H1 (cell line): ENCODE measurements at regions of chr11 and their contacts with region 1.

Region 1: DNA sequence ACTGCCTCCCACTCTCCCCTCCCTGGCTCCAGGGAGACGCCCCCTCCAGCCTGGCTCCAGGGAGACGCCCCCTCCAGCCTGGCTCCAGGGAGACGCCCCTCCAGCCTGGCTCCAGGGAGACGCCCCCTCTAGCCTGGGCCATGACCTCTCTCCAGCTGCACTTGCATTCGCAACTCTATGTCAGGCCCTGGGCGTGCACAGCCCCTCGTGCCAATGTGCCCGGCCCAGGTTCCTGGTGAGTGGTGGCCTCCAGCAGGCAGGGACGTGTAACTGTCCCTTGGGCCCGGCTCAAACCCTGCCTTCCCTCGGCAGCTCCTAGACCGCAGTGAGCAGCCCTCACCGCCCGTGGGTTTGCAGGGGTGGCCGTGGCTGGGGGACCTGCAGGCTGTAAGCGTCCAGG is 6.9 kb downstream of the MUC6 start:
- DNase-seq: no peak
- H3K4me3 ChIP-seq: no peak overlapping the region
- H3K27ac ChIP-seq: no peak overlapping the region
- H3K4me1 ChIP-seq: 0 out of 7 replicates have a peak, but pooled peaks cover 0 to 2% (median 0%) of the 10 kb centered on the region in 4 experiments
- H3K27me3 ChIP-seq: no peaks in the 10 kb centered on the region
- CTCF ChIP-seq: peak in 1 of 3 experiments; percentile 9; a peak in 1 of 4 replicates
- EP300 ChIP-seq: no peak
- POLR2A ChIP-seq: no peak
- RAD21 ChIP-seq: peak; percentile 11 to 33; a peak in 3 of 4 replicates

Region 2: GRCh38 chr11:1014276-1014675 is 15.4 kb before region 1 on chr11:
- CTCF ChIA-PET with region 1: interaction called, 4 read pairs
- POLR2A ChIA-PET with region 1: interaction called, 12 read pairs
- DNase-seq: no peak
- H3K4me3 ChIP-seq: no peak overlapping the region
- H3K27ac ChIP-seq: no peak overlapping the region
- H3K4me1 ChIP-seq: peaks cover 0 to 2% (median 0%) of the 10 kb centered on the region in 4 experiments; a peak in 1 of 7 replicates
- H3K27me3 ChIP-seq: peaks cover 0 to 2% (median 0%) of the 10 kb centered on the region in 4 experiments; a peak in 1 of 7 replicates
- CTCF ChIP-seq: no peak
- EP300 ChIP-seq: no peak
- POLR2A ChIP-seq: no peak
- RAD21 ChIP-seq: no peak

Region 3: GRCh38 chr11:1219834-1220815 is 190.5 kb after region 1 on chr11:
- CTCF ChIA-PET with region 1: no interaction called
- POLR2A ChIA-PET with region 1: no interaction called
- DNase-seq: peak in 1 of 2 experiments; percentile 41
- H3K4me3 ChIP-seq: no peak overlapping the region
- H3K27ac ChIP-seq: no peak overlapping the region
- H3K4me1 ChIP-seq: peaks cover 0 to 11% (median 5%) of the 10 kb centered on the region in 4 experiments; a peak in 6 of 7 replicates
- H3K27me3 ChIP-seq: no peaks in the 10 kb centered on the region; a peak in 1 of 7 replicates
- CTCF ChIP-seq: no peak
- EP300 ChIP-seq: no peak
- POLR2A ChIP-seq: no peak
- RAD21 ChIP-seq: no peak